Natural killer cell (primary cell): ENCODE measurements at regions of chr3 and their contacts with region 1.

Region 1: GRCh38 chr3:36944012-36944640 is 728 bp downstream of the TRANK1 start:
- DNase-seq: peak; percentile 44 to 53
- ATAC-seq: peak; percentile 37 to 53 (median 37)
- H3K4me3 ChIP-seq: peak overlapping the region; percentile 82
- H3K4me3 Mint-ChIP-seq: peak overlapping the region; percentile 83
- H3K27ac ChIP-seq: peak overlapping the region; percentile 8
- H3K27ac Mint-ChIP-seq: peak overlapping the region; percentile 41 to 81
- H3K4me1 ChIP-seq: peaks cover 18% of the 10 kb centered on the region
- H3K4me1 Mint-ChIP-seq: peaks cover 6 to 23% of the 10 kb centered on the region in 2 donors
- H3K27me3 ChIP-seq: no peaks in the 10 kb centered on the region
- H3K27me3 Mint-ChIP-seq: no peaks in the 10 kb centered on the region
- CTCF ChIP-seq: no peak

Region 2: DNA sequence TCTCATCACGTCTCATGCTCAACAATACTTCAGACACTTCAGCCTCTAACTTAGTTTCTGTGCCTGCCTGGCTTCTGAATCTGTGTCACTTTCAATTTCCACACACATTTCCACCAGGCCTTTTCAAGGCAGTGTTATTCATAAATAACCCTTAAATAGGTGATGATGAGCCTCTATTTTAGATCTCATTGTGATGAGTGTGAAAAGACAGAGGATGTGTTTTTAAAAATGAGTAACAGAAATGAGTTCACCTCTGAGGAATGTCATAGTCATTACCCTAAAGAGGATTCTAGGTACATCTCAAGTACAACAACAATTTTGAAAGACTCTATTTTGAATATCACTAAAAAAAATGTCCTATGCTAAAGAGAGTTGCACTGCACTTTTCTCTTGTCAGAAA is 499.2 kb before region 1 on chr3:
- intact Hi-C with region 1: no loop called
- DNase-seq: no peak
- ATAC-seq: no peak
- H3K4me3 ChIP-seq: no peak overlapping the region
- H3K4me3 Mint-ChIP-seq: no peak overlapping the region
- H3K27ac ChIP-seq: no peak overlapping the region
- H3K27ac Mint-ChIP-seq: no peak overlapping the region
- H3K4me1 ChIP-seq: no peaks in the 10 kb centered on the region
- H3K4me1 Mint-ChIP-seq: no peaks in the 10 kb centered on the region
- H3K27me3 ChIP-seq: no peaks in the 10 kb centered on the region
- H3K27me3 Mint-ChIP-seq: no peaks in the 10 kb centered on the region
- CTCF ChIP-seq: no peak

Region 3: DNA sequence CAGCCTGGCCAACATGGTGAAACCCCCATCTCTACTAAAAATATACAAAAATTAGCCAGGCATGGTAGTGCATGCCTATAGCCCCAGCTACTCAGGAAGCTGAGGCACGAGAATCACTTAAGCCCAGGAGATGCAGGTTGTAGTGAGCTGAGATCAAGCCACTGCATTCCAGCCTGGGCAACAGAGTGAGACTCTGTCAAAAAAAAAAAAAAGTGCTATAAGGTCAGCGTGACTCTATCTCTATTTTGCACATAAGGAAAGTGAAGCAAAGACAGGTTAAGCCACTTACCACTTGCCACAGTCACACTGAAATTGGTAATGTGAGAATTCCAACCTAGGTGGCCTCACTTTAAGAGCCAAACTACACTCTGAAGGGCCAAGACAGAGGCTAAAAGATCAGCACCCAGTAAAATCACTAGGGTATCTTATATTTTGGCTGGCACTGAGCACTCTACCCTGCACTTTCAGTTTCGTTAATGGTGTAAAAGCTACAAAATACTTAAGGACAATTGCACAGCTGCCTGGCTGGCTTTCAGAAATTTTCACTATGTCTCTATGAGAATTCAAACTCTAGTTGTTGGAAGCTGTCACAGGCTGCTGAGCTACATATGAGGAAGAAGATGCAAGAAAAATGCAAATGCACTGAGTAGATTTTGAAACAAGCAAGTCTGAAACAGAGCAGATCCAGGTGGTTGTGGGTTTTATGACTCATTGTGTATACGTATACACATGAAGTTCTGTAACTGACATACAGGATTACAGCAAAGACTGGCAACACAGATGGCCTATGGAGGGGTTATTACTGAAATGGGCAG is 31.9 kb before region 1 on chr3:
- intact Hi-C with region 1: loop called (anchors 2 kb)
- DNase-seq: peak in 1 of 2 donors; percentile 76
- ATAC-seq: peak; percentile 73 to 88 (median 76)
- H3K4me3 ChIP-seq: peak overlapping the region; percentile 6
- H3K4me3 Mint-ChIP-seq: peak overlapping the region; percentile 56
- H3K27ac ChIP-seq: peak overlapping the region; percentile 89
- H3K27ac Mint-ChIP-seq: peak overlapping the region; percentile 77 to 83
- H3K4me1 ChIP-seq: peaks cover 30% of the 10 kb centered on the region
- H3K4me1 Mint-ChIP-seq: peaks cover 29 to 37% of the 10 kb centered on the region in 2 donors
- H3K27me3 ChIP-seq: no peaks in the 10 kb centered on the region
- H3K27me3 Mint-ChIP-seq: no peaks in the 10 kb centered on the region
- CTCF ChIP-seq: no peak